ENCODE measurements at regions of chr3 and their contacts with region 1.

Region 1: GRCh38 chr3:132730891-132731580 is 8.8 kb upstream of the NPHP3 start:
- DNase-seq: peak; percentile 72
- H3K4me3 ChIP-seq: no peak overlapping the region
- H3K27ac ChIP-seq: no peak overlapping the region
- H3K4me1 ChIP-seq: no peaks in the 10 kb centered on the region
- H3K27me3 ChIP-seq: peaks cover 16% of the 10 kb centered on the region

Region 2: DNA sequence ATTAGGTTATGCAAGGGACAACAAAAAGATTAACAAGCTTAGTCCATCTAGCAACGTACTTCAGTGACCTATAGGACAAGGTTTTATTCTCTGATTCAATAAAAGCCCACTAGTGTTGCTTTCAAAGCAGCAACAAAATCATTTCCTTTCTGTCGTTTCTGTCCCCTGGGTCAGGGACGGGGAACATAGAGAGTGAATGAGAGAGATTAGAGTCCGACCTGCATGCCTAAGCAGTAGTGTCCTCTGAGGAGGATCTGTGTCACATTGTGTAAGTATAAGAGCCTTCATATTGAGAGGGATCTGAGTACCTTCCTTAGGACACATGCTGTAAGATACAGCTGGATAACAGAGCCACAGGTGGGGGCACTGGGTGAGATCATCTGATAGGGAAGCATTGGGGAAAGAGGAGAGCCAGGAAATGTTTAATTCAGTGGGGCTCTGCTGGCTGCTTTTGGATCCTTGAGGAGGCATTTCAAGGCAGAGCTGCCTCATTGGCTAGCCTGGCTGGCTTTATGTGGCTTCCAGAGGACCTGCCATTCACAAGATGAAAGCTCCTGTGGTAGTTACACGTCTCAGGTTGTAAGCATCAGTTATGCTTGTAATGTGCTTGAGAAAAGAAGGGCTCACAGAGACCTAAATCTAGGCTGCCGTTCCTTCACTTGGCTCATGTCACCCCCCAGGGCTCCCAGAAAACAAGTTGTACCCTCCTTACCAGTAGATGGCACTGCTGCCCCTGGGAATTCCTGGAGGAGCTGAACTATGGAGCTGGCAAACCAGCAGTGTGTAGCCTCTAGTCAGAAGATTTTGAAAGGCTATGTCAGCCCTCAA is 309.9 kb after region 1 on chr3:
- in situ Hi-C with region 1: loop called (anchors 10 kb)
- DNase-seq: peak; percentile 79
- H3K4me3 ChIP-seq: no peak overlapping the region
- H3K27ac ChIP-seq: no peak overlapping the region
- H3K4me1 ChIP-seq: no peaks in the 10 kb centered on the region
- H3K27me3 ChIP-seq: peaks cover 57% of the 10 kb centered on the region

Region 3: GRCh38 chr3:133426721-133427120 is 695.7 kb after region 1 on chr3:
- in situ Hi-C with region 1: loop called (anchors 10 kb)
- DNase-seq: peak; percentile 95
- H3K4me3 ChIP-seq: no peak overlapping the region
- H3K27ac ChIP-seq: peak overlapping the region; percentile 26
- H3K4me1 ChIP-seq: peaks cover 10% of the 10 kb centered on the region; the same call in 1 of the 2 replicates
- H3K27me3 ChIP-seq: no peaks in the 10 kb centered on the region; the same call in 1 of the 2 replicates